Heart right ventricle (tissue), 16 donors: ENCODE measurements at regions of chr1 and their contacts with region 1.

Region 1: DNA sequence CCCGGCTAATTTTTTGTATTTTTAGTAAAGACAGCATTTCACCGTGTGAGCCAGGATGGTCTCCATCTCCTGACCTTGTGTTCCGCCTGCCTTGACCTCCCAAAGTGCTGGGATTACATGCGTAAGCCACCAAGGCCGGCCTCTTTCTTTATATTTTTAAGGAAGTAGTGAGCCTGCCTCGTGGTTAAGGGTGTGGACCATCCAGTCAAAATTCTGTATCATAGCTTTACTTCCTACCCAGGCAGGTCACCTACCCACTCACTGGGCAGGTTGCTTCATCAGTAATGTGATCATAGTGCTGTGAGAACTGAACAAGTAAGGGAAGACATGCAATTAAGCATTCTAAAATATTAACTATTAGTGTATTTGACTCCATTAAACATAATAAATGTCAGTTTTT is 8.1 kb upstream of the ACOT7 start:
- DNase-seq: no peak
- ATAC-seq: no peak
- H3K4me3 ChIP-seq: no peak overlapping the region
- H3K27ac ChIP-seq: no peak overlapping the region
- H3K4me1 ChIP-seq: no peaks in the 10 kb centered on the region
- H3K27me3 ChIP-seq: peaks cover 0 to 14% (median 0%) of the 10 kb centered on the region in 7 donors
- CTCF ChIP-seq: no peak

Region 2: DNA sequence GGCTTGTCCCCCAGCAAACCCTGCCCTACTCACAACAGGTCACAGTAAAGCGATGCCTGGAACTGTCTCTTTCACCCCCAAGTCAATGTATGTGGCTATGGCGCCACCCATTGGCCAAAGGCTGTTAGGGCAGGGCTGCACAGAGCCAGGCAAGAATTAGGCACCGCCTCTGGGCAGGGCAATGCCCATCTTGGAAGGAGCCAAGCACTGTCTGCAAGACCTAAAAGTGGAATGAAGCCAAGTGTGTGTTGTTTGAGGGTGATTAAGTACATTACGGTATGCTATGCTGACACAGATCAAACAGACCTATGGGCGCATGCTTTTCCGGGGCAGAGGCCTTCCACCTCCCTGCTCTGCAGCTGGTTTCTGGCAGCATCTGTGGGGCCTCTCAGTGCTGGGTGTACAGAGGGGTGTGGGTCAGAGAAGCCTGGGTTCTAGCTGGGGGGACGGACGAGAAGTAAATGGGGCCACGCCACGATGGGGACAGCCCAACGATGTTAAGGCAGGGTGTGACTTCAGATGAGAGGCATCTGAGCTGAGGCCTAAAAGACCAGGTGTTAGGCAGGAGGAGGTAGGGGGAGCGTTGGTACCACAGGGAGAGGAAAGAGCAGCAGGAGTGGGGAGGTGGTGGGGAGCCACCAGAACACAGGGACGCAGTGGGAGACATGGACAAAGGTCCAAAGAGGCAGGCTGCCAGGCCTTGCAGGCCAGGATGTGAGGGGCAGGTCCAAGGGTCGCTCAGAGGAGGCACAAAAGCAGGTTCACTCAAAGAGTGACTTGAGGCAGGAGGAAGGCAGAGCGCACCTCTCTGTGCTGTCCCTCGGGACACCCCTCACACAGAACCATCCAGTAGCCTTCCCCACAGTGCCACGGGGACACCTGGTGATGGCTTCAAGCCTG is 57.9 kb before region 1 on chr1:
- intact Hi-C with region 1: loop called in 6 of 10 experiments (anchors 1 to 5 kb)
- DNase-seq: peak; percentile 61
- ATAC-seq: peak; percentile 72 to 85 (median 78)
- H3K4me3 ChIP-seq: no peak overlapping the region
- H3K27ac ChIP-seq: no peak overlapping the region
- H3K4me1 ChIP-seq: peaks cover 0 to 13% (median 7%) of the 10 kb centered on the region in 9 donors
- H3K27me3 ChIP-seq: no peaks in the 10 kb centered on the region
- CTCF ChIP-seq: peak; percentile 67 to 90 (median 83)

Region 3: DNA sequence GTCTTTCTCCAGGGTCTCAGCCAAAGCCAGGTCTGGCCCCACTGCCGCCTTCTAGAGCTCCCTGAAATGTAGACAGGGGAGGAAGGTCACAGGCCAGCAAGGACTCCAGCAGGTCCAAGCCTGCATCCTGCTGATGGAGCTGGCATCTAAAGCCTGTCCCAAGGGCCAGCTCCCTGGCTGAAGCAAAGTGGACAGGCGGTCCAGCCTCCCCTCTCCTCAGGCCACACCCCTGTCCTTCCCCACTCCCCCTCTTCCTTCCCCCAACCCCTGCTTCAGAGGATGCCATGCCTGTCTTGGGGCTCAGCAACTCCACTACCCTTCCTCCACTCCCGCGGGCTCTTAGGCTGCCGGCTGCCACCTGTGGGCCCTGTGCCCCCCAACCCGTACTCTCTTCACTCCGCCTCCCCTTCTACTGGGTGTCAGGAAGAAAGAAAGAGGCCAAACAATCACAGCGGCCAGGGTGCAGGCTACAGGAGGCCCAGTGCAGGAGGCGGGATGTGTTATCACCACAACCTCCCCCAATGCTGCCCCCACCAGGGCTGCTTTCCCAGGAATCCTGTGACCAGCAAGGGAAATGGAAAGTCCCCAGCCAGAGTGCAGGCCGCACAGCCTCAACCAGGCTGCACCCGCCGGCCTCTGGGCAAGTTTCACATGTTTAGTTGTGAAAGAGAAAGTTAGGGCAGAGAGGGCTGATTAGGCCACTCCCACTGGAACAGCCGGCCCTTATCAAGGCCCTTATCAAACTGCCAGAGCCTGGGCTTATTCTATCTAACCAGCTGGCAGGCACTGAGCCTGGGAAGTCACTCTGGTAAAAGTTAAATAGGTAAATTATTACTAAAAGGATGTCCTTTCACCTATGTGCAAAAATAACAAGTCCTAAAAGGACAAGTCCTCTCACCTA is 42.2 kb before region 1 on chr1:
- intact Hi-C with region 1: loop called (anchors 2 to 5 kb)
- DNase-seq: peak; percentile 59 to 68
- ATAC-seq: peak; percentile 33 to 82 (median 75)
- H3K4me3 ChIP-seq: peak overlapping the region in 5 of 10 donors; percentile 1 to 22 (median 17)
- H3K27ac ChIP-seq: peak overlapping the region; percentile 1 to 87 (median 80)
- H3K4me1 ChIP-seq: peaks cover 14 to 39% (median 32%) of the 10 kb centered on the region in 9 donors
- H3K27me3 ChIP-seq: no peaks in the 10 kb centered on the region
- CTCF ChIP-seq: peak in 2 of 9 donors; percentile 10 to 26